ENCODE measurements at regions of chr14 and their contacts with region 1.

Region 1: DNA sequence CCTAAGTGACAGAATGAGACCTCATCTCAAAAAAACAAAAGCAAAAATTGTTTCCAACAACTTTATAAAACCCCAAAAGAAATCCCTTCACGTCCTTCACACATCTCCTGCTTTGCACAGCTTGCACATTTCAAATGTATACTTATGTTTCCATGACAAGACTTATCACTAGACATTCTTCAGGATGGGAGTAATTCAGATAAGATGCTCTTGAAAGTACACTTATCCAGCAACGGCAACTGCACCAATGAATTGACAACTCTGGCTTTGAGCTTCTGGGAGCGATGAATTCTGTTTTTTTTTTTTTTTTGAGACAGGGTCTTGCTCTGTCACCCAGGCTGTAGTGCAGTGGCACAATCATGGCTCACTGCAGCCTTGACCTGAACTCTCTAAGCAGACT is 30.8 kb upstream of the AKAP5 start:
- DNase-seq: no peak
- H3K4me3 ChIP-seq: no peak overlapping the region
- H3K27ac ChIP-seq: no peak overlapping the region
- H3K4me1 ChIP-seq: peaks cover 4% of the 10 kb centered on the region
- H3K27me3 ChIP-seq: no peaks in the 10 kb centered on the region
- CTCF ChIP-seq: no peak
- POLR2A ChIP-seq: no peak

Region 2: DNA sequence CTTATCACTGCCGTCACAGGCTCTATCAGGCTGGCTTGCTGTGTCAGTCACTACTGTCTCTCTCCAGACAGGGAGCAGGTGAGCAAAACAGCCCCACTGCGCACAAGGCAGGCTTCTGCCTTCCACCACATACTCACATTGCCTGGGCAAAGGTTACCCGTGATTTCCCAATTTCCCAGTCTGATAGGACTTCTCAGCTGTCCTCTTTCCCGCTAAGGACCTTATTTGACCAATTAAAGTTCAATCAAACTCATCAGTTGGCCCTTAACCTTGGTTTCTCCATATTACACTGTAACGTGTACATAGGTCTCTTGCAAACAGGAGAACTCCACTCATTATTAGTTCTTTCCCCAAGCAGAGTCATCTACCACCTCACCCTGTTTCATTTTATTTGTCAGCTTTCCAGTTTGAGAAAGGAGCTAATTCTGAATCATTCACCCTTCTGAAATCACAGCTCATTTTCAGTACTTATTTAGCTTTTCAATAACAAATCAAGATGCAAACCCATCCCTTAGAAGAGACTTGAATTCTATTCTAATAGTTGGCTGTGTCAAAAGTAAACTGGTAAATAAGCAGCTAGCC is 311.2 kb before region 1 on chr14:
- intact Hi-C with region 1: no loop called
- DNase-seq: no peak
- H3K4me3 ChIP-seq: no peak overlapping the region
- H3K27ac ChIP-seq: no peak overlapping the region
- H3K4me1 ChIP-seq: peaks cover 5% of the 10 kb centered on the region
- H3K27me3 ChIP-seq: no peaks in the 10 kb centered on the region
- CTCF ChIP-seq: no peak
- POLR2A ChIP-seq: no peak

Region 3: GRCh38 chr14:64478634-64479250 is 44.2 kb after region 1 on chr14:
- intact Hi-C with region 1: loop called (anchors 5 kb)
- DNase-seq: no peak
- H3K4me3 ChIP-seq: no peak overlapping the region
- H3K27ac ChIP-seq: no peak overlapping the region
- H3K4me1 ChIP-seq: no peaks in the 10 kb centered on the region
- H3K27me3 ChIP-seq: no peaks in the 10 kb centered on the region
- CTCF ChIP-seq: peak in 3 of 4 experiments; percentile 29 to 46 (median 45)
- POLR2A ChIP-seq: no peak